Activated CD4-positive, alpha-beta T cell treated with anti-CD3 and anti-CD28 coated beads for 36 hours (primary cell): ENCODE measurements at regions of chr7 and their contacts with region 1.

Region 1: GRCh38 chr7:83173664-83174063 is 11.0 kb upstream of the PCLO start:
- DNase-seq: no peak
- ATAC-seq: no peak
- H3K4me3 Mint-ChIP-seq: no peak overlapping the region
- H3K27ac Mint-ChIP-seq: no peak overlapping the region
- H3K4me1 Mint-ChIP-seq: no peaks in the 10 kb centered on the region
- H3K27me3 Mint-ChIP-seq: no peaks in the 10 kb centered on the region

Region 2: GRCh38 chr7:83148776-83149175 is 24.9 kb before region 1 on chr7:
- CTCF ChIA-PET with region 1: no interaction called
- POLR2A ChIA-PET with region 1: no interaction called
- intact Hi-C with region 1: no loop called
- DNase-seq: no peak
- ATAC-seq: no peak
- H3K4me3 Mint-ChIP-seq: no peak overlapping the region
- H3K27ac Mint-ChIP-seq: no peak overlapping the region
- H3K4me1 Mint-ChIP-seq: no peaks in the 10 kb centered on the region
- H3K27me3 Mint-ChIP-seq: no peaks in the 10 kb centered on the region

Region 3: DNA sequence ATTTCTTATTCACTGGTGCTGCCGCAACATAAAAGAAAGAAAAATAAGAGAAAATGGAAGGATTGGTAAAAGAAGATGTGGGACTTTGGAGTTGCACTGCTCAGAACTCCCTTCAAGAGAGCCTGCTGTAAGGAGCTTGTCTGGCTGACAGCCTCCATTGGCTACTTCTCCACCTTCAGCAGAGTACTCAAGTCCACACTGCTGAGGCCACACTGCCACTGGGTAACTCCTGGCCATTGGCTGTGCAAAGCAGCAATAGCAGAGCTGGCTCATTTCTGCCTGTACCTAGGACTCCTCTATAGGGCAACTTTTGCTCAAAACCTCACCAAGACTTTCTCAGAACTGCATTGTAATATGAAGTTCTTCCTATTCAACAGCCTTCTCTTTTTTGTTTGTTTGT is 27.7 kb after region 1 on chr7:
- CTCF ChIA-PET with region 1: no interaction called
- POLR2A ChIA-PET with region 1: no interaction called
- intact Hi-C with region 1: no loop called
- DNase-seq: no peak
- ATAC-seq: no peak
- H3K4me3 Mint-ChIP-seq: no peak overlapping the region
- H3K27ac Mint-ChIP-seq: no peak overlapping the region
- H3K4me1 Mint-ChIP-seq: no peaks in the 10 kb centered on the region
- H3K27me3 Mint-ChIP-seq: no peaks in the 10 kb centered on the region

Region 4: DNA sequence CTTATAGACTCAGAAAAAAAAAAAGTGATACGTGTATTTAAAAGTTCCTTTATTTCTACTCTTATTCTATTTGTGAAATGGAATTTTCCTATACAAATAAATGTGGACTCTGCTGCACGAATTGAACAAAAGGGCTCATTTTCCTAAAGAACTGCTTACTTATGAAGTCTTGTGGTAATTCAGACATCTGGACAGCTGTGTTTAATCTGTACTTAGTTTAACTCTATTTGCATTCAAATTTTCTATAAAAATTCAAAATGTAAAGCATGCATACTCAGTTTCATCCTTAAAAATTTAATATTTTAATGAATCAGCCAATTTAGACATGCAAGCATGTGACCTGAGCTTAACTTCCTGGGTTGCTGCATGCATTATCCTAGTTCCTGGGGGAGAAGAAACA is 107.0 kb after region 1 on chr7:
- CTCF ChIA-PET with region 1: no interaction called
- POLR2A ChIA-PET with region 1: no interaction called
- intact Hi-C with region 1: no loop called
- DNase-seq: no peak
- ATAC-seq: no peak
- H3K4me3 Mint-ChIP-seq: no peak overlapping the region
- H3K27ac Mint-ChIP-seq: no peak overlapping the region
- H3K4me1 Mint-ChIP-seq: no peaks in the 10 kb centered on the region
- H3K27me3 Mint-ChIP-seq: no peaks in the 10 kb centered on the region

Region 5: DNA sequence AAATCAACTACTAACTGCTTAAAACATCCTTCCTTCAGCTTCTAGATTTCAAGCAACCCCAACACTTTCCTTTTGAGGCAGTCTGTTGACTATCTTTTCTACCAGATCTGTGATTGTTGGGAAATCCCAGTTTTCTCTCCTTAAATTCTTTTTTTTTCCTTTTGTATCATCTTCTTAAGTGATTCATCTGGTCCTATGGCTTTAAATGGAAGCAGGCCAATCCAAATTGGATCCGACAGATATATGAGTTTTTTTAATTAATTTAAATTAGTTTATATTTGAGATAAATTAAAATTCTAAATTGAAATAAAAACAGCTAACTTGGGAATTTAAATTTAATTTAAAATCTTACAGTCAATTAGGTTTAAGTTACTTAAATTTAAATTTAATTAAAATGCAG is 140.3 kb after region 1 on chr7:
- CTCF ChIA-PET with region 1: no interaction called
- POLR2A ChIA-PET with region 1: no interaction called
- intact Hi-C with region 1: no loop called
- DNase-seq: no peak
- ATAC-seq: no peak
- H3K4me3 Mint-ChIP-seq: no peak overlapping the region
- H3K27ac Mint-ChIP-seq: no peak overlapping the region
- H3K4me1 Mint-ChIP-seq: no peaks in the 10 kb centered on the region
- H3K27me3 Mint-ChIP-seq: no peaks in the 10 kb centered on the region

Region 6: GRCh38 chr7:85130702-85131101 is 1957.0 kb after region 1 on chr7:
- CTCF ChIA-PET with region 1: no interaction called
- POLR2A ChIA-PET with region 1: no interaction called
- intact Hi-C with region 1: loop called in 1 of 2 experiments (anchors 5 kb)
- DNase-seq: no peak
- ATAC-seq: no peak
- H3K4me3 Mint-ChIP-seq: no peak overlapping the region
- H3K27ac Mint-ChIP-seq: no peak overlapping the region
- H3K4me1 Mint-ChIP-seq: no peaks in the 10 kb centered on the region
- H3K27me3 Mint-ChIP-seq: no peaks in the 10 kb centered on the region